ENCODE measurements at regions of chr17 and their contacts with region 1.

Region 1: GRCh38 chr17:37752482-37752881 is 7.6 kb upstream of the HNF1B start:
- DNase-seq: no peak
- ATAC-seq: no peak
- H3K4me3 ChIP-seq: no peak overlapping the region
- H3K27ac ChIP-seq: no peak overlapping the region
- H3K4me1 ChIP-seq: no peaks in the 10 kb centered on the region; a peak in 1 of 4 replicates
- H3K27me3 ChIP-seq: no peaks in the 10 kb centered on the region
- CTCF ChIP-seq: no peak
- POLR2A ChIP-seq: no peak
- RAD21 ChIP-seq: no peak

Region 2: DNA sequence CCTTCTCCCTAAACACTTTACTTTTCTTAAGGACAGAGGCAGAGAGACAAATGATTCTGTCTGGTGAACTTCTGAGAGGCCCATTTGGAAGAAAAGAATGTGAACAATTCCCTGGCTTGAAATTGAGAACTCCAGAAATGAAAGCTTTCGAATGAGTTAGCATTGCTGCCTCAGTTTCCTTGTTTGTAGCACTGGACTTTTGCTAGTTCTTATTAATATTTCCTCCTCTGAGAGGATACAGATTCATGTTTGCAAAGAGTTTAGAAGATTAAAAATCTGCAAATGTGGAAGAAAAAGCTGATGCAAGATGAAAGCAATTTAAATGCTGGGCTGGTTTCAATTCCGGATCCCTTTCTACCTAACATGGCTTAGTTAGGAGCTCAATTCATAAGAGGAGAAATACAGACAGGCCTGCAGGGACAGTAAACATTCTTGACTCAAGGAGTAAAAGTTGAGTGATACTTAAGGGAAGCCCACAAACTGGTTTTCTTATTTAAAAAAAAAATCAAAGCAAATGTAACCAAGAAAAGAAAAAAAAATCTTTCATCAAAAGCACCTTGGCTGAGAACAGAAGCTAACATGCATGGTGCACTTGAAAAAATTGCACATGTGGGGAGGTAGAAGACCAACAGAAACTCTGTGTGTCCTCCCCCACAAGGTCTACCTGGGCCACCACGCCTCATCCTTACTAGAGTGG is 34.7 kb before region 1 on chr17:
- CTCF ChIA-PET with region 1: no interaction called
- POLR2A ChIA-PET with region 1: no interaction called
- RAD21 ChIA-PET with region 1: no interaction called
- intact Hi-C with region 1: loop called (anchors 5 kb)
- DNase-seq: no peak
- ATAC-seq: no peak
- H3K4me3 ChIP-seq: no peak overlapping the region
- H3K27ac ChIP-seq: no peak overlapping the region
- H3K4me1 ChIP-seq: peaks cover 10 to 12% of the 10 kb centered on the region in 2 experiments
- H3K27me3 ChIP-seq: no peaks in the 10 kb centered on the region
- CTCF ChIP-seq: no peak
- POLR2A ChIP-seq: no peak
- RAD21 ChIP-seq: no peak

Measured in HCT116 (cell line).